ENCODE measurements at regions of chr15 and their contacts with region 1.

Region 1: DNA sequence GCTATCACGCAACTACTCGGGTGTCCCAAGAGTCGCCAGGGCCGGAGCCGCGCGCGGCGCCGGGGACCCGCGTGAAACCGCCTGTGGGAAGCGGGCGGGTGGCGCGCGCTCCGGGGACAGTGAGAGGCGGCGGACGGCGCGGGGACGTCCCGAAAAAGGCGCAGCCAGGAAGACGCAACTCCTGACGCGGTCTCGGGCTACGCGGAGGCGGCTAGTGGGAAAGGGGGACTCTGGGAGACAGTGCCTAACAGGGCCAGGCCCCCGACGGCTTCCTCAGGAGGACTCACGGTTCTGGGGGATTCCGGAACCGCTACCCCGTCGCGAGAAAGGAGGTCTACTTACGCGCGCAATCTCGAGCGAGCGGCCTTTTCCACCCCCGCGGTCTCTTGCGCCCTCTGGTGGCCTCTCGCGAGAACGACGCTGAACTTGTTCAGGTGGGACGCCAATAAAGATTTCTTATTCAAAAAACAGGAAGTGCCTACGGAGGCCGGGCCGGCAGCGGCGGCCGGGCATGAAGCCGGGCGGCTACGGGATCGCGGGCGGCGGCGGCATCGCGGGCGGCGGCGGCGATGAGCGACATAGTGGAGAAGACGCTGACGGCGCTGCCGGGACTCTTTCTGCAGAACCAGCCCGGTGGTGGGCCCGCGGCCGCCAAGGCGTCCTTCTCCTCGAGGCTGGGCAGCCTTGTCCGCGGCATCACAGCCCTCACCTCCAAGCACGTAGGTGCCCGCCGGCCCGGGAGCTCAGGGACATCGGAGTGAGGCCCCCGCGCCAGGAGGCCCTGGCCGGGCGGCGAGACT is at the start of gene AP4E1:
- DNase-seq: peak; percentile 90 to 96 (median 93)
- ATAC-seq: peak; percentile 82 to 91 (median 90)
- H3K4me3 ChIP-seq: peak within 1 kb of the TSS; percentile 77 to 100 (median 94)
- H3K27ac ChIP-seq: peak within 1 kb of the TSS; percentile 47 to 97 (median 90)
- H3K4me1 ChIP-seq: peaks cover 0 to 45% (median 27%) of the 10 kb centered on the region in 12 donors
- H3K27me3 ChIP-seq: no peaks in the 10 kb centered on the region
- CTCF ChIP-seq: peak; percentile 95 to 99 (median 98)
- POLR2A ChIP-seq: peak in 1 of 2 donors; percentile 73
- total RNA-seq, gene AP4E1: 6.6 to 12.0 (median 9.8) TPM

Region 2: DNA sequence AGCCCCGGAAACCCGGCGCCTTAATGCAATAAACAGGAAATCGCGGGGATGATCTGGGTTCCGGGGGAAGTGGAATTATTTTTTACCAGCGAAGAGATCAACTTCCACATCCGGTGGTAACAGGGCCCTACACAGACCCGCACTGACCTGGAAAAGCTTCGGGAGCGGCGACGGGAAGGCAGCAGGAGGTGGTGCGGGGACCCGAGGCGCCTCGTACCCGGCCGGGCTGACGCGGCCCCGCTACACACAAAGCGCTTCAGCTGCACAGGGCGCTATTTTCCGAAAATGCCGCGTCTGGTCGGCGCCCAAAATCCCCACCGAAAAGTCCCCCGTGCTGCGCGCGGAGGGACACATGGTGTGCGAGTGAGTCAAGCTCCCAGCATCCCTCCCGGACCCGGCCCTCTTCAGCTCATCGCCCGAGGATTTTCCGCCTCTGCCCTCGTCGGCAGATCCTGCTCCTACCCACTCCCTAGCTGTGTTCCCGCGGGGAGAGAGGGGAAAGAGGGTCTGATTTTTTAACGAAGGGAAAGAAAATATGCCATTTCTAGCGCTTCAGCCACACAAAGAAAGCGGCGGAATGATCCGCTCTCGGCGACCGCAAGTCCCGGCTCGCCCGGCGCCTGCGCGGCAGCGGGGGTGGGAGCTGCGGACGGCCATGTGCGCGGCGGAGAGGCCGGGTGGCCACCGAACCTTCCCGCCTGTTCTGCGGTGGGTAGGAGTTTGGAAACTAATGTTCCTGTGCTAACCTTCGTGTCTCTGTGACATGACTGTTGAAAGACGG is 553.4 kb before region 1 on chr15 and contains the start of gene GABPB1:
- intact Hi-C with region 1: loop called in 1 of 10 experiments (anchors 10 kb)
- DNase-seq: peak; percentile 89 to 93 (median 91)
- ATAC-seq: peak; percentile 85 to 91 (median 88)
- H3K4me3 ChIP-seq: peak within 1 kb of the TSS; percentile 87 to 99 (median 94)
- H3K27ac ChIP-seq: peak within 1 kb of the TSS; percentile 97 to 100 (median 99)
- H3K4me1 ChIP-seq: peaks cover 7 to 60% (median 44%) of the 10 kb centered on the region in 12 donors
- H3K27me3 ChIP-seq: no peaks in the 10 kb centered on the region
- CTCF ChIP-seq: no peak
- POLR2A ChIP-seq: peak in 1 of 2 donors; percentile 33
- total RNA-seq, gene GABPB1: 7.0 to 14.2 (median 9.6) TPM

Region 3: GRCh38 chr15:50675536-50676144 is 232.8 kb before region 1 on chr15:
- intact Hi-C with region 1: loop called in 2 of 10 experiments (anchors 10 kb)
- DNase-seq: no peak
- ATAC-seq: no peak
- H3K4me3 ChIP-seq: no peak overlapping the region
- H3K27ac ChIP-seq: no peak overlapping the region
- H3K4me1 ChIP-seq: peaks cover 0 to 58% (median 23%) of the 10 kb centered on the region in 12 donors
- H3K27me3 ChIP-seq: no peaks in the 10 kb centered on the region
- CTCF ChIP-seq: peak; percentile 69 to 83 (median 78)
- POLR2A ChIP-seq: no peak

Region 4: GRCh38 chr15:50940506-50940905 is 32.1 kb after region 1 on chr15:
- intact Hi-C with region 1: loop called in 1 of 10 experiments (anchors 2 kb)
- DNase-seq: no peak
- ATAC-seq: no peak
- H3K4me3 ChIP-seq: no peak overlapping the region
- H3K27ac ChIP-seq: no peak overlapping the region
- H3K4me1 ChIP-seq: no peaks in the 10 kb centered on the region
- H3K27me3 ChIP-seq: no peaks in the 10 kb centered on the region
- CTCF ChIP-seq: no peak
- POLR2A ChIP-seq: no peak